ENCODE measurements at regions of chr9 and their contacts with region 1.

Region 1: GRCh38 chr9:257957-258356 is 43.3 kb downstream of the DOCK8 start:
- DNase-seq: no peak
- H3K4me3 ChIP-seq: no peak overlapping the region
- H3K4me3 Mint-ChIP-seq: no peak overlapping the region
- H3K27ac Mint-ChIP-seq: no peak overlapping the region
- H3K4me1 ChIP-seq: peaks cover 12% of the 10 kb centered on the region
- H3K4me1 Mint-ChIP-seq: no peaks in the 10 kb centered on the region
- H3K27me3 ChIP-seq: no peaks in the 10 kb centered on the region
- H3K27me3 Mint-ChIP-seq: no peaks in the 10 kb centered on the region
- CTCF ChIP-seq: no peak

Region 2: DNA sequence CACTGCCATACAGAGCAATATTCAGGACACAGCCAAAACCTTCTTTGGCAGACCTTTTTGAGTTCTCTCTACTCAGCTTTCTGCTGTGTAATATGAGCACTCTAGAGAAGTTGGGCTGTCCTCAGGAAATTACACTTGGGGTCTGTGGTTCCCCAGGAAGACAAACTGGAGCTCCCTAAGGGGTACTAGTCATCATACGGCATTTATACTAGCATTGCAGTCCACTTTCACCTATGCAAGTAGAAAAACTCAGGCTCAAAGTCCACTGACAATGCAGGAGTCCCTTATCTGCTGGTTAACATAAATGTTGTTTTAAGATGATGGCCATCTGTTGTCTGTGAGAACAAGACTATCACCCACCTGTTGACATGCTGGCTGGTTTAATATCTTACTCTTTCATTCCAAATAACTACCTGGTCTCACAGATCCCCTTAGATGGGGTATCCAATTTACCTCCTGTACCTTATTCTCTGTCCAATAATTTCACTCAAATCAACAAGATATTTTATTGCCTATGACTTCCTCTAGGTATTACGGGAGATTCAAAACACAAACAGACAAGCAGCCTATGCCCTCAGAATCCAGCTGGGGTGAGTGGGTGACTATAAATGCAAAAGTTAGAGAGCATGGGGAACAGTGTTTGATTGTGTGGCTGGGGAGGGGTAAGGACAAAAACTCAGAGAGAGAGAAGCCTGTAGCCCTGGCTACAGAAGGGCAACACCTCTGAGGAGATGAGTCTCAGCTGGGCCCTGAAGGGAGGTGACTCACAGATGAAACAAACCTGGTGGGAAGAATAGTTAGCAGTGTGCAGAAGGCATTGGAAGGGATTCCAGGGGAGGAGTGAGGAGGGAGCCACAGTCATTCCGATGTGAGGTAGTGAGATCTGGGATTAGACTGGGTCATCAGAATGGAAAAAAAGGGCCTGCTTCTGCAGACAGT is 33.1 kb before region 1 on chr9:
- CTCF ChIA-PET with region 1: no interaction called
- POLR2A ChIA-PET with region 1: no interaction called
- intact Hi-C with region 1: loop called (anchors 5 kb)
- DNase-seq: peak; percentile 29 to 37
- H3K4me3 ChIP-seq: no peak overlapping the region
- H3K4me3 Mint-ChIP-seq: no peak overlapping the region
- H3K27ac Mint-ChIP-seq: no peak overlapping the region
- H3K4me1 ChIP-seq: peaks cover 35% of the 10 kb centered on the region
- H3K4me1 Mint-ChIP-seq: peaks cover 14% of the 10 kb centered on the region
- H3K27me3 ChIP-seq: no peaks in the 10 kb centered on the region
- H3K27me3 Mint-ChIP-seq: no peaks in the 10 kb centered on the region
- CTCF ChIP-seq: no peak

Region 3: DNA sequence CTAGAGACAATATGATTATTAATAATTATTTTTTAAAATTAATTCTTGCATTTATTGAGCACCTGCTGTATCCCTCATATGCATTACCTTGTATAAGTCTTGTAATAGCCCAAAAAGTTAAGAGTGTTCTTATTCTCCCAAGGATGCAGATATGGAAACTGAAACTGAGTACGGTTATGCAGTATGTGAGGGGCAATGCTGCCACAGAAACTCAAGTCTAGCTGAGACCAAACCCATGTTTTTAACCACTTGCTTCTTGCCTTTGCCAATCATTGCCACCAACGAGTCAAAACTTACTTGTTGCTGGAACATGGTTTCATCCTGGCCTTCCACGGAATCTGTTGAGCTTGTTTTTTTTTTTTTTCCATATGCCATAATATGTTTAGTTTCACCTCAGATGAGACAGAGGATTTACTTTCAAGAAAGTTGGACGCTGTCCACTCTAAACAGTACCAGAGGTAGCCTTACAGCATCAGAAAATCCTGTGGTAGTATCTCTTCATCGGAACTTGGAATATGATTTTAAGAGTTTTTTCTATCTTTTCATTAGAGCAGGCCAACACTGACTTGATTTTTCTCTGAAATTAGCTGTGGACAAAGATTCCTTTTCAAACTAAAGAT is 15.4 kb before region 1 on chr9:
- CTCF ChIA-PET with region 1: no interaction called
- POLR2A ChIA-PET with region 1: no interaction called
- intact Hi-C with region 1: loop called (anchors 1 kb)
- DNase-seq: no peak
- H3K4me3 ChIP-seq: no peak overlapping the region
- H3K4me3 Mint-ChIP-seq: no peak overlapping the region
- H3K27ac Mint-ChIP-seq: no peak overlapping the region
- H3K4me1 ChIP-seq: no peaks in the 10 kb centered on the region
- H3K4me1 Mint-ChIP-seq: no peaks in the 10 kb centered on the region
- H3K27me3 ChIP-seq: no peaks in the 10 kb centered on the region
- H3K27me3 Mint-ChIP-seq: no peaks in the 10 kb centered on the region
- CTCF ChIP-seq: no peak